ENCODE measurements at regions of chr4 and their contacts with region 1.

Region 1: DNA sequence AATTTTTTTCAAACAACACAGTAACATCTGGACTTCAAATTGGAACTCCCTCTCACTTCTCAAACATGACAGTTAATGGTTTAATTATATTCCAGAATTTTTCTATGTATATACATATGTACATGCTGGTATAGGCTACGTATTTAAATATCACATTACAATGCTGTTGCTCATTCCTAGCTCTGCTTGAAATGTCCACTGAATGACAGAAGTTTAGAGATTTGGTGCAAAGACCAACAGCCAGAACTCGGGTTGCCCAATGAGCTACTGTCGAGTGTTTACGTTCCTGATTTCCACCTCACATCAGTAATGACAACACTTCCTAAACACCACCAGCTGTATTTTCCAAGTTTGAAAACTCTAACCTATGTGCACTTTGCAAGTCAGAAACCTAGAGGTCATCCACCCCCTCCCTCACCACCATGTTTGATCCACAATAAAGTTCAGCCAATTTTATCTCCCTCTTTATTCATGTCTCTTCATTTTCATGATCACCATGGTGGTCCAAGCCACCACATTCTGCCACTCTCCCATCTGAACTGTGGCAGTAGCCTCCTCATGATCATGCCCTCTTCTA is 49.3 kb upstream of the RPL34 start:
- DNase-seq: no peak
- ATAC-seq: no peak
- H3K4me3 ChIP-seq: no peak overlapping the region
- H3K27ac ChIP-seq: no peak overlapping the region
- H3K4me1 ChIP-seq: peaks cover 0 to 5% (median 0%) of the 10 kb centered on the region in 9 donors
- H3K27me3 ChIP-seq: peaks cover 0 to 11% (median 0%) of the 10 kb centered on the region in 7 donors
- CTCF ChIP-seq: no peak

Region 2: DNA sequence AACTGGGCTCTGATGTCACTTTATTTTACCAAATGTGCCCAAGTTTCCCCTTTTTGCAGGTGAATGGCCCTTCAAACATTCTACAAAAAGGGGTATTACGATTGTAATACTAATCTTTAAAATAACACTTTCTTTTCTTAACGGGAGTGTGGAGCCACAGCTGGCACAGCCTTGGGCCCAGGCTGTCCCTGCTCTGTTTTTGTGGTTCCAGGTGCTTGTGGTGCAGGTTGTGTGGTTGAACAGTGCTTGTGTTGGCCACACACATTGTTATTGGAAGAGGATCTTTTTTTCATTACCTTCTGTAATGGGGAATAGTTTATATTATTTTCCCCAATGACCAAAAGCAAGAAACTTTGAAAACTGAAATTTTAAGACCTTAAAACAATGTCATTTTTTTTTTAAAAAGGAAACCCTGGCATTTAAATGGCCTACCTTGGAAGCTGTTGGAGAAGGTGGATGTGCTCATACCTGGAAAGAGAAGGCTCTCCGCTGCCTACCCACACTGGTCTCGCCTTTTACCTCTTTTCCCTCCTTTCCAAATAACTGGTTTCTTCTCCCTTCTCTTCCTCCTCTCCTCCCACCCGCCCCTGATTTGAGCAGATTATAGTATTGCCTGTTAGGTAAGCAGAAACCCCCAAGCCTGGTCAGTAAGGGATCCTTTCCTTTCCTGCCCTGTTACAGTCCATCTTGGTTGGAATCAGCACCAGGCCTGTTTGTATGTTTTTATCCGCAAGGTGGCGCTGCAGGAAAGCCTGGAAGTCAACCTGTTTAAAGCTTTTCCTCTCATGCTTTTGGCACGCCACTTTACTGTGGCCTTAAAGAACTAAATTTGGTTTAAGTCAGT is 552.8 kb before region 1 on chr4:
- intact Hi-C with region 1: loop called (anchors 2 to 10 kb)
- DNase-seq: peak; percentile 70 to 86
- ATAC-seq: peak; percentile 69 to 86 (median 78)
- H3K4me3 ChIP-seq: no peak overlapping the region
- H3K27ac ChIP-seq: peak overlapping the region in 2 of 10 donors; percentile 5 to 16
- H3K4me1 ChIP-seq: peaks cover 0 to 27% (median 6%) of the 10 kb centered on the region in 9 donors
- H3K27me3 ChIP-seq: no peaks in the 10 kb centered on the region
- CTCF ChIP-seq: peak; percentile 68 to 91 (median 87)

Region 3: DNA sequence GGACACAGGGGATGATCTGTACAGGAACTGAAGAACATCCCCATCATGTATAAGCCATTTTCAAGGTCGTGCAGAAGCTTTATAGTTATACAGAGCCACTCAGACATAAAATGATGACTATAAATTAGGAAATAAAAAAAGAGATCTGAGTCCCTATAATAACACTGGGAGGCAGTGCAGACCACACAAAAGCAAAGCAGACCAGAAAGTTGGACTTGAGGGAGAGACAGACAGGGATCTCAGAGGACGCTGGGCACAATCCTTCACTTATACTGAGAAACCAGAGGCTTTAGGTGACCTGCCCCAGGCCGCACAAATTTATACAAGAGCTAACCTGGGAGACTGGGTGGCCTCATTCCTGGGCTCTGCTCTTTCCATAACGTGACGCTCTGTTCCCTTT is 510.9 kb before region 1 on chr4:
- intact Hi-C with region 1: loop called in 6 of 10 experiments (anchors 2 to 10 kb)
- DNase-seq: no peak
- ATAC-seq: peak in 6 of 8 donors; percentile 54 to 73 (median 65)
- H3K4me3 ChIP-seq: no peak overlapping the region
- H3K27ac ChIP-seq: no peak overlapping the region
- H3K4me1 ChIP-seq: no peaks in the 10 kb centered on the region
- H3K27me3 ChIP-seq: peaks cover 0 to 26% (median 5%) of the 10 kb centered on the region in 7 donors
- CTCF ChIP-seq: peak in 7 of 9 donors; percentile 24 to 61 (median 55)

Region 4: DNA sequence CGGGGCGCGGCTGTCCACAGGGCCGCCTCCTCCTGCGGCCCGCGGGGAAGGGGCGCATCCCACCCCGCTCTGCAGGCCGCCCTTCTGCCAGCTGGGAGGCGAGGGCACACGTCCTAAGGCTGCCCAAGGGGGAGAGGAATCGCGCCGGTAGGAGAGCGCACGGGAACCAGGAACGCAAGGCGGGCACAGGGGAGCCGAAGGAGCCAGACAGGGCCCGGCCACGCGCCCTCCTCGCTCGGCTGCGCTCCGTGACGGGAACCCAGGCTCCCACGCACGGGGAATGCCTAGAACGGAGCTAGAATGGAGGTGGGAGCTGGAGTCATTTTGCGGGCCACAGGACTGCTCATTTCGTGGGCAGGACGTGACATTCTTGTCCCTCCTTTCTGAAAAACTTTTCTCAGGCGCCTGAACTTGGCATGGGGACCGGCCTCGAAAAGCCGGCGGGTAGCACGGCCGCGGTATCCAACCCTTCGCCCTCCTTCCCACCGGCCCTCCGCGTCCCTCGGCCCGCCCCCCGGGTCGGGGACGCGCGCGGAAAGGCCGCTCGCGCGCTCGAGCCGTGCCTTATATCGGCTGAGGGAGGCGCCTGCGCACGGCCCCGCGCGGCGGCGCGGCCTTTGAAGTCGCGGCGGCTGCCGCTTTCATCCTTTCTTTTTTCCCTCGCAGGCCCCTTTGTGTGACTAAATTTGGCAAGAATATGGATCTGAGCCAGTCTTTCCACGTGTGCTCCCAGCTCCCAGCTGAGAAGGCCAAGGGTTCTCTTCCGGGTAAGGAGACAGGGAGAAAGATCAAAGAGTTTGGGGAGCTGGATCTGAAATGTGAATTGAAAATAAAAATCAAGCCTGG is 398.1 kb before region 1 on chr4:
- intact Hi-C with region 1: loop called in 2 of 10 experiments (anchors 10 kb)
- DNase-seq: peak; percentile 15 to 28
- ATAC-seq: peak; percentile 58 to 88 (median 82)
- H3K4me3 ChIP-seq: peak overlapping the region; percentile 41 to 64 (median 58)
- H3K27ac ChIP-seq: peak overlapping the region in 5 of 10 donors; percentile 48 to 66 (median 52)
- H3K4me1 ChIP-seq: peaks cover 3 to 45% (median 30%) of the 10 kb centered on the region in 9 donors
- H3K27me3 ChIP-seq: peaks cover 19 to 90% (median 77%) of the 10 kb centered on the region in 7 donors
- CTCF ChIP-seq: no peak

Region 5: DNA sequence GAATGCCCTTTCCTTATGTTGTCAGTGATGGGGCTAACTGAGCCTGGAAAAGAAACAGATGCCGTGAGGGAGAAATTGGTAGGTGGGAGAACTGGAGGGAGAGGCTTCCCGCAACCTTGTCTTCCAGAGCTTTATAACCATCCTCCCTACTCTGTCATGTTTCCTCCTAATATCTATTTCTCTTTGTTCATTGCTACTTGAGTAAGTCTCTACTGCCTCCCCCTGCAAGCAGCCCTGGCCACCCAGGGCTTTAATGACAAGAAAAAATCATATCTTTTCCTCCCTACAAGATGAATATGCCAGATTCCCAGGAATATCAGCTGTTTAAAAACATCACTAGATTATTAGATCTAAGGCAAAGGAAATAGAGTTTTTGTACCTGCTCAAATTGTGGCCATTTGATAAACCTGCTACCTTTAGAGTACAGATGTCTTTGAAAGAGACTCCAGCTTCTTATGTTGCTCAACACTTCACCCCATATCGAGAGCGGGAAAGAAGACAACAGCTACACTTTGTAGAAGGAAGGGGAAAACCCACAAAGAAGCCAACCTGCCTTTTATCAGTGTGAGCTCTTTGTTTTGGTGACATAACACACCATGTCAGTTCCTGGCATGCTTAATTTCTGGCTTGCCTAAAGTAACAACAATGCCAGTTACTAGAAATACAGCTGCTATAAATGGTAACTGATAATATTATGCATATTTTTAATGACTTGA is 215.7 kb before region 1 on chr4:
- intact Hi-C with region 1: loop called in 1 of 10 experiments (anchors 10 kb)
- DNase-seq: no peak
- ATAC-seq: peak in 6 of 8 donors; percentile 33 to 81 (median 55)
- H3K4me3 ChIP-seq: no peak overlapping the region
- H3K27ac ChIP-seq: no peak overlapping the region
- H3K4me1 ChIP-seq: peaks cover 0 to 49% (median 25%) of the 10 kb centered on the region in 9 donors
- H3K27me3 ChIP-seq: peaks cover 0 to 7% (median 0%) of the 10 kb centered on the region in 7 donors
- CTCF ChIP-seq: no peak